ENCODE measurements at regions of chr17 and their contacts with region 1.

Region 1: DNA sequence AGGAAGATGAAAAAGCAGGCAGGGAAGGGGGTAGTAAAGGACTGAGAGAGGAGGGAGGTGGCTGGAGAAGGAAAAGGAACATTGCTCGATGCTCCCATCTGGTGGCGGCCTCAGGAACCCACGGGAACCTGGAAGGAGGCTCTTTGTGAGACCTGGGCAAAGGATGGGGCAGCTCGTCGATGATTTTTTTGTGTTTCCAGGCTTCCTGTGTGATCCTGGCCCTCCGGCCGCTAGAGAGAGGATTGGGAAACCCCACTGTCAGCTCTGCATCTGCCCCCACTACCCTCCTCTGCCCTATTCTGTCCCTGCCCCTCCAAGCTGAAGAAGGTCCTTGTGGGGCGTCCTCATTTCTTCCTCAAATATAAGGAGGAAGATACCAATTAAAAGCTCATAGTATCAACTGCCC is 6.6 kb downstream of the WFIKKN2 start:
- DNase-seq: no peak
- H3K4me3 ChIP-seq: no peak overlapping the region
- H3K27ac ChIP-seq: no peak overlapping the region
- H3K4me1 ChIP-seq: peaks cover 0 to 8% (median 7%) of the 10 kb centered on the region in 4 donors
- H3K27me3 ChIP-seq: no peaks in the 10 kb centered on the region
- CTCF ChIP-seq: peak; percentile 81 to 86 (median 85)
- EP300 ChIP-seq: no peak
- POLR2A ChIP-seq: no peak

Region 2: GRCh38 chr17:50783193-50783660 is 58.7 kb before region 1 on chr17:
- intact Hi-C with region 1: loop called (anchors 2 kb)
- DNase-seq: peak; percentile 96
- H3K4me3 ChIP-seq: no peak overlapping the region
- H3K27ac ChIP-seq: no peak overlapping the region
- H3K4me1 ChIP-seq: peaks cover 11 to 36% (median 23%) of the 10 kb centered on the region in 4 donors
- H3K27me3 ChIP-seq: peaks cover 0 to 5% (median 0%) of the 10 kb centered on the region in 4 donors
- CTCF ChIP-seq: peak; percentile 95 to 100 (median 98)
- EP300 ChIP-seq: no peak
- POLR2A ChIP-seq: no peak

Measured in esophagus muscularis mucosa (tissue), 4 donors.